Panc1 (cell line): ENCODE measurements at regions of chr7 and their contacts with region 1.

Region 1: DNA sequence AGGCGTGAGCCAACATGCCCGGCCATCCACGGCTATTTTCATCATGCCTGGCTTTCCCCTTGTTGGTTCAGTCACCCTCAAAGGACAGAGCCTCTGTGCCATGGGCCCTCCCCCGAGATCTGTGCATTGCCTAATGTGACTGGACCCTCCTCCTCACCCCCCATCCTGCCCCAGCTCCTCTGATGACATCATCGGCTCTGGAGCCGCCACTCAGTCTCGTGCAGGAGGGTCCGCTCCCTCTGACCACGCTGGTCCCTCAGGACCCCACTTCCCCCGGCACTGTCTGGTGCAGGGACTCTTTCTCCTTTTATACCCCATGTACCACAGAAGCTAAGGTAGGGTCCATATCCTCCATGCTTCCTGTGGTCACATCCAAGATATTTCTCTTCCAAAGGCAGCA is 33.2 kb upstream of the BAIAP2L1 start:
- DNase-seq: no peak
- ATAC-seq: no peak
- H3K4me3 ChIP-seq: no peak overlapping the region
- H3K27ac ChIP-seq: no peak overlapping the region
- H3K4me1 ChIP-seq: no peaks in the 10 kb centered on the region
- H3K27me3 ChIP-seq: no peaks in the 10 kb centered on the region
- CTCF ChIP-seq: no peak

Region 2: GRCh38 chr7:98539879-98540278 is 105.8 kb after region 1 on chr7:
- CTCF ChIA-PET with region 1: no interaction called
- POLR2A ChIA-PET with region 1: no interaction called
- in situ Hi-C with region 1: no loop called
- intact Hi-C with region 1: no loop called
- DNase-seq: no peak
- ATAC-seq: no peak
- H3K4me3 ChIP-seq: no peak overlapping the region
- H3K27ac ChIP-seq: no peak overlapping the region
- H3K4me1 ChIP-seq: no peaks in the 10 kb centered on the region
- H3K27me3 ChIP-seq: no peaks in the 10 kb centered on the region
- CTCF ChIP-seq: no peak

Region 3: DNA sequence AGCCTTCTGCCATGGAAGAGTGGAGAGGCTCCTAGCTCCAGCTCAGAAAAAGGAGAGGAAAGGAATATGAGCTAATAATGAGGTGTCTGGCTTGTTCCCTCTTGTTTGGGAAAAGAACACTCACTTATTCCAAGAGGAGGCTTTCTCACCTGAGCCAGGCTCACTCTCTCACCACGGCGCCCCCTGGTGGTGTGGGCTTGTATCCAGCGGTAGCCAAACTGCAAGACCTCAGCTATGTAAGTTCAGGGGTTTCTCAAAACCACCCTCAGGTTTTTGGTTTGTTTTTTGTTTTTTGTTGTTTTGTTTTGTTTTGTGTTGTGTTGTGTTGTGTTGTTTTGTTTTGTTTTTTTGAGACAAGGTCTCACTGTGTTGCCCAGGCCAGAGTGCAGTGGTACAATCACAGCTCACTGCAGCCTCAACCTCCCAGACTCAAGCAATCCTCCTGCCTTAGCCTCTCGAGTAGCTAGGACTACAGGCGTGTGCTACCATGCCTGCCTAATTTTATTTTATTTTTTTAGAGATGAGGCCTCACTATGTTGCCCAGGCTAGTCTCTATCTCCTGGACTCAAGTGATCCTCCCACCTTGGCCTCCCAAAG is 311.7 kb after region 1 on chr7:
- CTCF ChIA-PET with region 1: interaction called, 5 read pairs
- POLR2A ChIA-PET with region 1: no interaction called
- in situ Hi-C with region 1: no loop called
- intact Hi-C with region 1: loop called (anchors 2 kb)
- DNase-seq: peak; percentile 65
- ATAC-seq: peak; percentile 90
- H3K4me3 ChIP-seq: no peak overlapping the region
- H3K27ac ChIP-seq: no peak overlapping the region
- H3K4me1 ChIP-seq: no peaks in the 10 kb centered on the region
- H3K27me3 ChIP-seq: 0 out of 2 replicates have a peak, but pooled peaks cover 2% of the 10 kb centered on the region
- CTCF ChIP-seq: peak; percentile 94